ENCODE measurements at regions of chr15 and their contacts with region 1.

Region 1: GRCh38 chr15:43510200-43511011 is 7.0 kb upstream of the MAP1A start:
- DNase-seq: peak; percentile 88 to 98 (median 96)
- ATAC-seq: peak; percentile 90
- H3K4me3 ChIP-seq: peak overlapping the region; percentile 65 to 81
- H3K4me3 Mint-ChIP-seq: peak overlapping the region; percentile 94
- H3K27ac ChIP-seq: peak overlapping the region; percentile 74 to 82
- H3K27ac Mint-ChIP-seq: peak overlapping the region; percentile 96
- H3K4me1 ChIP-seq: peaks cover 21% of the 10 kb centered on the region
- H3K4me1 Mint-ChIP-seq: peaks cover 27% of the 10 kb centered on the region
- H3K27me3 ChIP-seq: no peaks in the 10 kb centered on the region
- H3K27me3 Mint-ChIP-seq: no peaks in the 10 kb centered on the region
- CTCF ChIP-seq: peak; percentile 10

Region 2: GRCh38 chr15:43105778-43106485 is 404.5 kb before region 1 on chr15 and contains the start of gene UBR1:
- CTCF ChIA-PET with region 1: no interaction called
- POLR2A ChIA-PET with region 1: no interaction called
- intact Hi-C with region 1: loop called in 1 of 2 experiments (anchors 5 kb)
- DNase-seq: peak; percentile 71 to 97 (median 88)
- ATAC-seq: peak; percentile 84
- H3K4me3 ChIP-seq: peak within 1 kb of the TSS; percentile 72 to 86
- H3K4me3 Mint-ChIP-seq: peak within 1 kb of the TSS; percentile 89
- H3K27ac ChIP-seq: peak within 1 kb of the TSS; percentile 87 to 96
- H3K27ac Mint-ChIP-seq: peak within 1 kb of the TSS; percentile 99
- H3K4me1 ChIP-seq: peaks cover 24% of the 10 kb centered on the region
- H3K4me1 Mint-ChIP-seq: peaks cover 48% of the 10 kb centered on the region
- H3K27me3 ChIP-seq: no peaks in the 10 kb centered on the region
- H3K27me3 Mint-ChIP-seq: no peaks in the 10 kb centered on the region
- CTCF ChIP-seq: no peak
- total RNA-seq, gene UBR1: 53.4 to 54.3 TPM

Region 3: GRCh38 chr15:43370975-43371974 is 139.1 kb before region 1 on chr15 and contains the starts of genes TUBGCP4 and ZSCAN29:
- CTCF ChIA-PET with region 1: interaction called, 4 read pairs
- POLR2A ChIA-PET with region 1: interaction called, 5 read pairs
- intact Hi-C with region 1: loop called (anchors 5 kb)
- DNase-seq: peak; percentile 34 to 86 (median 71)
- ATAC-seq: peak; percentile 70
- H3K4me3 ChIP-seq: peak within 1 kb of the TSS; percentile 88 to 93
- H3K4me3 Mint-ChIP-seq: peak within 1 kb of the TSS; percentile 91
- H3K27ac ChIP-seq: peak within 1 kb of the TSS; percentile 48 to 74
- H3K27ac Mint-ChIP-seq: peak within 1 kb of the TSS; percentile 86
- H3K4me1 ChIP-seq: peaks cover 23% of the 10 kb centered on the region
- H3K4me1 Mint-ChIP-seq: peaks cover 54% of the 10 kb centered on the region
- H3K27me3 ChIP-seq: no peaks in the 10 kb centered on the region
- H3K27me3 Mint-ChIP-seq: no peaks in the 10 kb centered on the region
- CTCF ChIP-seq: no peak
- total RNA-seq, gene TUBGCP4: 3.9 to 5.8 TPM
- total RNA-seq, gene ZSCAN29: 9.7 to 9.8 TPM

Region 4: GRCh38 chr15:43406189-43406588 is 104.2 kb before region 1 on chr15:
- CTCF ChIA-PET with region 1: no interaction called
- POLR2A ChIA-PET with region 1: no interaction called
- intact Hi-C with region 1: no loop called
- DNase-seq: no peak
- ATAC-seq: no peak
- H3K4me3 ChIP-seq: no peak overlapping the region
- H3K4me3 Mint-ChIP-seq: no peak overlapping the region
- H3K27ac ChIP-seq: no peak overlapping the region
- H3K27ac Mint-ChIP-seq: no peak overlapping the region
- H3K4me1 ChIP-seq: no peaks in the 10 kb centered on the region
- H3K4me1 Mint-ChIP-seq: no peaks in the 10 kb centered on the region
- H3K27me3 ChIP-seq: no peaks in the 10 kb centered on the region
- H3K27me3 Mint-ChIP-seq: no peaks in the 10 kb centered on the region
- CTCF ChIP-seq: no peak

Region 5: DNA sequence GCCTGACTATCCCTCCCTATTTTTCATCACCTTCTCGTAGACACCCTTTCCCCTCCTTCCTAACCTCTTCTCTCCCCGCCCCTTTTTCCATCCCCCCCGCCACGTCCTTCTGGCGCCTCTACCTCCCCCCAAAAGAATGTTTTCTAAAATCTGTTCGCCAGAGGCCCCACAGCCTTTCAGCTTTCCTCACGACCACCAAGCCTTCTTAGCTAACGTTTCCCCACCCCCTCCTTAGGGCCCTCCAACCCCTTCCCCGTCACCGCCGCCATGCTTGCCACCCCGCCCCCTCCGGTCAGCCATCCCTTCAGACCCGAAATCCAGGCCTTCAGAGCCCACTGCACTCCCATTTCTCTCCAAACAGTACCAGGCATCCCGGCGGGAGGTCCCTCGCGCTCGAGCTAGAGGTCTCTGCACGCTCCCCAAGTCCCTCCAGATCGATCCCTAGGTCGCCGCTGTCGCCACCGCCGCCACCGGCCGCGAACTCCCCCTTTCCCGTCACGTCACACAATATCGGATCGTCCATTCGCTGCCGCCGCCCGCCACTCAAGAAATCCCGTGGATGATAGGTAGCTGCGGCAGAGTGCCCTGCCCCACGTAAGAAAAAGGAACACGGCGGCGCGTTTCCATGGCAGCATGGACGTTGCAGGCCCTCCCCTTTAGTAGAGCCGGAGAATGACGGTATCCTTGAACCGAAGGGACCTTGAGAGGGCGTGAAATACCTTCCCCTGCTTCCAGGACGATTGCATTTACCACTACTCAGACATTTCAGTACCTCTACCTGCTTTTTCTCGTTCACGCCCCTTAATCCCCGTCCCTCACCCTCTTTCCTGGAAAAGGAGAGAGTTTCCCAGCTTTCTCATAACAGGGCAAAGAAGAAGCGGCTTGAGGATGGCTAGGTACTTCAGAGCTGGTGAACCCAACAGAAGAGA is 17.5 kb before region 1 on chr15 and contains the start of gene TP53BP1:
- CTCF ChIA-PET with region 1: interaction called, 8 read pairs
- POLR2A ChIA-PET with region 1: interaction called, 16 read pairs
- intact Hi-C with region 1: loop called (anchors 1 kb)
- DNase-seq: peak; percentile 87 to 97 (median 94)
- ATAC-seq: peak; percentile 98
- H3K4me3 ChIP-seq: peak within 1 kb of the TSS; percentile 87 to 92
- H3K4me3 Mint-ChIP-seq: peak within 1 kb of the TSS; percentile 99
- H3K27ac ChIP-seq: peak within 1 kb of the TSS; percentile 95 to 96
- H3K27ac Mint-ChIP-seq: peak within 1 kb of the TSS; percentile 98
- H3K4me1 ChIP-seq: peaks cover 24% of the 10 kb centered on the region
- H3K4me1 Mint-ChIP-seq: peaks cover 32% of the 10 kb centered on the region
- H3K27me3 ChIP-seq: no peaks in the 10 kb centered on the region
- H3K27me3 Mint-ChIP-seq: no peaks in the 10 kb centered on the region
- CTCF ChIP-seq: no peak
- total RNA-seq, gene TP53BP1: 54.6 to 59.7 TPM

Region 6: GRCh38 chr15:43776718-43777583 is 266.5 kb after region 1 on chr15 and contains the start of gene ELL3:
- CTCF ChIA-PET with region 1: no interaction called
- POLR2A ChIA-PET with region 1: no interaction called
- intact Hi-C with region 1: loop called in 1 of 2 experiments (anchors 10 kb)
- DNase-seq: peak; percentile 67 to 93 (median 82)
- ATAC-seq: peak; percentile 80
- H3K4me3 ChIP-seq: peak within 1 kb of the TSS; percentile 82 to 94
- H3K4me3 Mint-ChIP-seq: peak within 1 kb of the TSS; percentile 93
- H3K27ac ChIP-seq: peak within 1 kb of the TSS; percentile 50 to 56
- H3K27ac Mint-ChIP-seq: peak within 1 kb of the TSS; percentile 87
- H3K4me1 ChIP-seq: peaks cover 11% of the 10 kb centered on the region
- H3K4me1 Mint-ChIP-seq: peaks cover 15% of the 10 kb centered on the region
- H3K27me3 ChIP-seq: no peaks in the 10 kb centered on the region
- H3K27me3 Mint-ChIP-seq: no peaks in the 10 kb centered on the region
- CTCF ChIP-seq: peak; percentile 82
- total RNA-seq, gene ELL3: 0.67 to 1.1 TPM

Region 7: DNA sequence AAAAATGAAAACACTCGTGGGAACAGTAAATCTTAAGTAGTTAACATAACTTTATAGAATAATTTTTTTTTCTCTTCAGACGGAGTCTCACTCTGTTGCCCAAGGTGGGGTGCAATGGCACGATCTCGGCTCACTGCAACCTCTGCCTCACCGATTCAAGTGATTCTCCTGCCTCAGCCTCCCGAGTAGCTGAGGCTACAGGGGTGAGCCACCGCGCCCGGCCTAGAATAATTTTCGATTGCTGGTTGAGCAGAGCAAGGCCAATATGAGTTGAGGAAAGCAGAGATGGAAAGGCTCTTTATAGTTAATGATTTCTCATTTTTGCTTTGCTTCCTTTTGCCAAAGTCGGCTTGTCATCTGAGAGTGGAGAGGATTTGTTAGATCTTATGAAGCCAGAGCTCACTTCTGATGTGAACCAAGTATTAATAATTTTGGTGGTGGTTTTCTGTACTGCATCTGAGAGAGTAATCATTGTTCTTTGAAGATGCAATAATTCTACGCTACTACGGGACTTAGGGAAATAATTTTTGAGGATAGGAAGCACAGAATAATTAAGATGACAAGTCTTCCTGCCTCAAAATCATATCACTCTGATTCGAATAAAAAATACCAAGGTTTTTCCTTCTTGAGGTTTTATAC is 776.5 kb after region 1 on chr15:
- CTCF ChIA-PET with region 1: no interaction called
- POLR2A ChIA-PET with region 1: interaction called, 3 read pairs
- intact Hi-C with region 1: loop called in 1 of 2 experiments (anchors 5 kb)
- DNase-seq: peak in 2 of 9 experiments; percentile 7 to 36
- ATAC-seq: no peak
- H3K4me3 ChIP-seq: peak overlapping the region; percentile 77 to 91
- H3K4me3 Mint-ChIP-seq: peak overlapping the region; percentile 94
- H3K27ac ChIP-seq: peak overlapping the region; percentile 95 to 97
- H3K27ac Mint-ChIP-seq: peak overlapping the region; percentile 98
- H3K4me1 ChIP-seq: peaks cover 26% of the 10 kb centered on the region
- H3K4me1 Mint-ChIP-seq: peaks cover 42% of the 10 kb centered on the region
- H3K27me3 ChIP-seq: no peaks in the 10 kb centered on the region
- H3K27me3 Mint-ChIP-seq: peaks cover 2% of the 10 kb centered on the region
- CTCF ChIP-seq: peak; percentile 36